PC-3 (cell line): ENCODE measurements at regions of chr12 and their contacts with region 1.

Region 1: DNA sequence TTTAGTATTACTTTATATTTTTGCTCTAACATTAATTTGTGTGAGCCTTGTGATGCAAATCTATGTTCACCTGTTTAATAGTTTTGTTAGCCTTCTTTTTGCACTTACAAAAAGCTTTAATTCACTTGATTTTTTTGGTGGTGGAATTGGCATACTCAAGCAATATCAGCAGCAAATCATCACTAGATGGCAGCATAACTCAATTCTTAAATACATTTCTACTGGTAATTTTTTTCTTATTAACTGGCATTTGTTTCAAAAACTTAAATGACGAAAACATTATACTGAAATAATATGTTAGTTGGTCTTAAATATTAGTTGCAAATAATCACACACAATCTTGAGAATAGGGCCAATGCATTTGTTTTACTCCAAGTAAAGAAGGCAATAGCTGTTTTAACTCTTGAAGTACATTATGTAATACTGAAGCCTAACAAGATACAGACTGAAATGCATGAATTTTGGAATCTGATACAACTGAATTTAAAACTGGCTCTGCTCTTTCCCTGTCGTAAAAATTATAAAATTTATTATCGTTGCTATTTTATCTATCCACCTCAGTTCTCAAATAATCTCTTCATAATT is 151.5 kb downstream of the ATXN7L3B start:
- DNase-seq: peak; percentile 65
- ATAC-seq: 0 out of 2 replicates have a peak, but pooled peaks have one; percentile 31
- H3K4me3 ChIP-seq: no peak overlapping the region
- H3K27ac ChIP-seq: no peak overlapping the region
- H3K4me1 ChIP-seq: no peaks in the 10 kb centered on the region
- H3K27me3 ChIP-seq: no peaks in the 10 kb centered on the region
- CTCF ChIP-seq: peak; percentile 80

Region 2: DNA sequence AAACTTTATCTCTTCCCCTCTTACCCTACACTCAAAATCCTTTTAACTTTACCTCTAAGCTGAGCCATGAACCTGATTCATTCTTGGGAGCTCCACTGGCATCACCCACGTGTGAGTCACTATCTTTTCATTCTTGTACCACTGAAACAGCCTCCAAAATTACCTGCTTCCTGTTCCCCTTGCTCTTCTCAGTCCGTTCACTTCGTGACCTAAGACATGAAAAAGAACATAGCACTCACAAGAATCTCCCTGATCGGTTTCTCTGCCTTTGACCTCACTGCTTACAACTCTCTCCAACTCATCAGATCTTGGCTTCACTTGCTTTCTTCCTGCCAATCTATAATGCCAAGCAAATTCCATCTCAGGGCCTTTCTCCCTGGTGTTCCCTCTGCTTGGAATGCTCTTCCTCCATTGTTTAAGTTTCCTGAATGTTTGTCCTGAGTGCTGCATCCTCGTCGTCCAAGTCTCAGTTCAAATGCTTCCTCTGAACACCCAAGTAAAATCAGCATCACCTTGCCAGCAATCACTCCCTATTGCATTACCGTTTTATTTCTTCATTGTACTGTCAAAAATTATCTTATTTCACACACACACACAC is 800.5 kb after region 1 on chr12:
- CTCF ChIA-PET with region 1: interaction called, 3 read pairs
- POLR2A ChIA-PET with region 1: no interaction called
- intact Hi-C with region 1: loop called (anchors 5 kb)
- DNase-seq: peak; percentile 78
- ATAC-seq: peak; percentile 74
- H3K4me3 ChIP-seq: no peak overlapping the region
- H3K27ac ChIP-seq: peak overlapping the region; percentile 50
- H3K4me1 ChIP-seq: peaks cover 18% of the 10 kb centered on the region
- H3K27me3 ChIP-seq: no peaks in the 10 kb centered on the region
- CTCF ChIP-seq: no peak

Region 3: GRCh38 chr12:75505706-75506312 is 816.6 kb after region 1 on chr12:
- CTCF ChIA-PET with region 1: no interaction called
- POLR2A ChIA-PET with region 1: no interaction called
- intact Hi-C with region 1: loop called (anchors 1 kb)
- DNase-seq: peak; percentile 64
- ATAC-seq: peak; percentile 37; the same call in 1 of the 2 replicates
- H3K4me3 ChIP-seq: no peak overlapping the region
- H3K27ac ChIP-seq: no peak overlapping the region
- H3K4me1 ChIP-seq: peaks cover 13% of the 10 kb centered on the region; the same call in 1 of the 2 replicates
- H3K27me3 ChIP-seq: no peaks in the 10 kb centered on the region
- CTCF ChIP-seq: peak; percentile 87